ENCODE measurements at regions of chr2 and their contacts with region 1.

Region 1: DNA sequence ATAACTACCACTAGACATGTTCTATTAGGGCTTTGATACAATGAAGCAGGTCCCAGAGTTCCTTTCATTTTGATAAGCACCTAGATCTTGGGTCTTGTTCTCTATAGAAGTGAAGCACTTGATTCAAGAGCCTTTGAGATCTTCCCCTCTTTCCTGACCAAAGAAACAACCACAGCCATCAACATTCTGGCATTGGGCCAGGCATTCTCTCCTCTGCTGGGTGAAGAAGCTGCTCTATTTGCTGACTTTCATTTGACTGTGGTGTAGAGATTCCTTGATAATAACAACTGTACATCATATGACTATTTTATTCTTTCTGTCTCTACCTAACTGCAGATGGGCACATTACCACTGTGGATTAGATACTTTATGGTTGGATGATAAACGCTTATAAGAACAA is 96.6 kb upstream of the LYPD1 start:
- DNase-seq: no peak

Region 2: GRCh38 chr2:132741754-132742153 is 24.8 kb before region 1 on chr2:
- intact Hi-C with region 1: loop called in 1 of 2 experiments (anchors 1 kb)
- DNase-seq: no peak